ENCODE measurements at regions of chr10 and their contacts with region 1.

Region 1: GRCh38 chr10:52215745-52216361 is 98.2 kb upstream of the DKK1 start:
- DNase-seq: no peak
- ATAC-seq: peak; percentile 66 to 85 (median 68)
- H3K4me3 ChIP-seq: no peak overlapping the region
- H3K27ac ChIP-seq: peak overlapping the region; percentile 79
- H3K4me1 ChIP-seq: peaks cover 45% of the 10 kb centered on the region
- H3K27me3 ChIP-seq: no peaks in the 10 kb centered on the region
- CTCF ChIP-seq: peak; percentile 87

Region 2: GRCh38 chr10:50990568-50991185 is 1225.2 kb before region 1 on chr10:
- intact Hi-C with region 1: loop called (anchors 5 to 10 kb)
- DNase-seq: peak; percentile 51 to 77
- ATAC-seq: peak; percentile 72 to 77 (median 74)
- H3K4me3 ChIP-seq: peak overlapping the region; percentile 94
- H3K27ac ChIP-seq: peak overlapping the region; percentile 95
- H3K4me1 ChIP-seq: peaks cover 19% of the 10 kb centered on the region
- H3K27me3 ChIP-seq: no peaks in the 10 kb centered on the region
- CTCF ChIP-seq: no peak

Region 3: DNA sequence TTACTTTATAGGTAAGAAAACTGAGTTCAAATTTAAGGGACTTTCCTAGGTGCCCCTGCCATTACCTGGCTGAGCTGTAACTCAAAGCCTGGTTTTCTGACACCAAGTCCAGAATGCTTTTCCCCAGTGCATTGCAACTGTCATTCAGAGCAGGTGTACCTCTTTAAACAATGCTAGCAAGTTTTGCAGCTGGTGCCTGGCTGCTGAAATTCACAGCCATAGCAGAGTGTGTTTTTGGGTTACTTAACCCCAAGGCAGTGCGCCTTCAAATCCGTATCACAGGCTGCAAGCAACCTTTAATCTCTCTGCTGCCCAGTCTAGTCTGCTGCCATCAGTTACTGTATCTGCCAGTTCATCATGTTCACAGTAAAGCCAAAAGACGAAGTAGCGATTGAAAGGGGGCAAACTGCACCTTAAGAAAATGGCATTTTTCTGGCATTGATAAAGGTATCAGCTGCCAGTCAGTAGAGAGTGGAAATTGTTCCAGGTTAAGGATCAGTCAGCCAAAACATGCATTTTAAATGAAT is 781.8 kb before region 1 on chr10:
- intact Hi-C with region 1: loop called in 1 of 2 experiments (anchors 10 kb)
- DNase-seq: no peak
- ATAC-seq: peak in 1 of 4 donors; percentile 32
- H3K4me3 ChIP-seq: no peak overlapping the region
- H3K27ac ChIP-seq: no peak overlapping the region
- H3K4me1 ChIP-seq: peaks cover 20% of the 10 kb centered on the region
- H3K27me3 ChIP-seq: no peaks in the 10 kb centered on the region
- CTCF ChIP-seq: no peak

Region 4: DNA sequence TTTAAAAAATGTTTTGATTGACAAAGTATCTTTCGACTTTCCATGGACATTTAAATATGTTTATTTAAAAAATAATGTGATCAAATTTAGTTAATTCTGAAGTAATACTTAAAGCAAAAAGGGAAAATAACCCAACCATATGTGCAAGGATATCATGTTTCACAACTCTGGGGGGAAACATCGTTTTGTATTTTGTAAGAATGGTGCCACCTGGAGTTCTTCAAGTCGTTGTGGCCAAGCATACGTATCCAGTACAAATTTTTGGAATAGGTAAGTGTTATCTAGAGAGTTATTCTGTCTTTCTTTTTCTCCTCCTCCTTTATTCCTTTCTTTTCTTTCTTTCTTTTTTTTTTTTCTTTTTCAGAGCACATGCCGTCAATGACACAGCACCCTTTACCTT is 340.2 kb before region 1 on chr10:
- intact Hi-C with region 1: no loop called
- DNase-seq: no peak
- ATAC-seq: no peak
- H3K4me3 ChIP-seq: no peak overlapping the region
- H3K27ac ChIP-seq: no peak overlapping the region
- H3K4me1 ChIP-seq: peaks cover 6% of the 10 kb centered on the region
- H3K27me3 ChIP-seq: no peaks in the 10 kb centered on the region
- CTCF ChIP-seq: no peak

Region 5: DNA sequence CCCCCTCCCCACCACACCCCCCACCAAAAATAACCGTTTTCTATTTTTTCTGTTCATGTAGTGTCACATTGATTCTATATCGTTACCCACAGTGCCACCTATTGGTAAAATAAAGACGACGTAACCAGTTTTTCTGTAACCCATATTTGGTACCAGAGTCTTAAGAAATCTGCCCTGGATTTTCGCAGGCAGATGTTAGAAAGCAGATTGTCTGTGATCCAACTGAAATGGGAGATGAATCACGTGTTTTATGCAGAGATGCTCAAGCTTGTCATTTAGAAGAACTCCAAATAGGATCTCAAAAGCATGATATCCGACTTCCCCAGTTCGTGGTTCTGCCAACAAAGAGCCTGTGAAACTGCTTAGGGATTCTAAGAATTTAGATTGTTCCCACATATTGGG is 255.4 kb before region 1 on chr10:
- intact Hi-C with region 1: loop called in 1 of 2 experiments (anchors 10 kb)
- DNase-seq: no peak
- ATAC-seq: peak; percentile 65 to 87 (median 76)
- H3K4me3 ChIP-seq: no peak overlapping the region
- H3K27ac ChIP-seq: no peak overlapping the region
- H3K4me1 ChIP-seq: peaks cover 4% of the 10 kb centered on the region
- H3K27me3 ChIP-seq: no peaks in the 10 kb centered on the region
- CTCF ChIP-seq: peak; percentile 57

Region 6: GRCh38 chr10:52071814-52072213 is 144.0 kb before region 1 on chr10:
- intact Hi-C with region 1: loop called (anchors 5 to 10 kb)
- DNase-seq: peak in 1 of 2 donors; percentile 63
- ATAC-seq: peak; percentile 95 to 99 (median 98)
- H3K4me3 ChIP-seq: peak overlapping the region; percentile 31
- H3K27ac ChIP-seq: peak overlapping the region; percentile 71
- H3K4me1 ChIP-seq: peaks cover 21% of the 10 kb centered on the region
- H3K27me3 ChIP-seq: no peaks in the 10 kb centered on the region
- CTCF ChIP-seq: no peak